ENCODE measurements at regions of chr10 and their contacts with region 1.

Region 1: DNA sequence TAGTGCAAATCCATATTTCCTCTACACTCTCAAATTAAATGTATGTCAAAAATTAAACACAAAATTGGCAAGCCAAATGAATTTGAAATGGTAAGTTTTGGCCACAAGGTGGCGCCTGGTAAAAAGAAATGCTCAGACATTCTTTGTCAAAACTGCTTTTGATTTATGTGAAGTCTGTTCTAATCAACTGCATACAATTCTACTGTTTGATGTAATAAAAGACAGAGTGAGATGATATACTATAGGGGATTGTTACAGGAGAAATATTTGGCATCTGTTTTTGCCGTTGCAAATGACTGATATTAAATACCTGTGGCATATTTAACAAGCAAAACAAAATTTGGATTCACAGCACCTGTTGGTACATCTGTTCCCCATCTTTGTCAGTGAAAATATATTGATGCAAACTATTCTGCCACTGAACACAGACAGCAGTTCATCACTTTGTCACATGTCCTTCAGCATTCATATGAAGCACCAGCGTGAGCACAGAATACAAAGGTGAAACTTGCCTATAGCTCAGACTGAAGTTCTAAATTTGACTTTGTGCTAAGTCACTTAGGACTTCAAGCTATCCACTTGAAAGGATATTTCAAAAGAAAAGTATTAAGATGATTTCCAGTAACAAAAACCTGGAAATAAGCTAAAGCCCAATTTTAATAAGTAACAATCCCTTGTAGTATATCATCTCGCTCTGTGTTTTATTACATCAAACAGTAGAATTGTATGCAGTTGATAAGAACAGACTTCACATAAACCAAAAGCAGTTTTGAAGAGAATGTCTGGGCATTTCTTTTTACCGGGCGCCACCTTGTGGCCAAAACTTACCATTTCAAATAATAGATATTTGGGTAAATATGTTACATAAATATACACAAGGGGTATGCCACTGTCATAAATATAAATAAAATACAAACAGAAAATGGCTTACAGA is 10.2 kb upstream of the CH25H start:
- DNase-seq: peak; percentile 70
- H3K4me3 ChIP-seq: no peak overlapping the region
- H3K27ac ChIP-seq: no peak overlapping the region
- H3K4me1 ChIP-seq: peaks cover 6% of the 10 kb centered on the region
- CTCF ChIP-seq: peak; percentile 89

Region 2: GRCh38 chr10:88835096-88835909 is 382.0 kb before region 1 on chr10:
- CTCF ChIA-PET with region 1: no interaction called
- POLR2A ChIA-PET with region 1: interaction called, 3 read pairs
- intact Hi-C with region 1: loop called (anchors 2 kb)
- DNase-seq: peak; percentile 88
- H3K4me3 ChIP-seq: no peak overlapping the region
- H3K27ac ChIP-seq: no peak overlapping the region
- H3K4me1 ChIP-seq: peaks cover 15% of the 10 kb centered on the region
- CTCF ChIP-seq: peak; percentile 99

Region 3: GRCh38 chr10:89029785-89030437 is 187.4 kb before region 1 on chr10:
- CTCF ChIA-PET with region 1: interaction called, 3 read pairs
- POLR2A ChIA-PET with region 1: interaction called, 4 read pairs
- intact Hi-C with region 1: loop called (anchors 1 kb)
- DNase-seq: peak; percentile 77
- H3K4me3 ChIP-seq: no peak overlapping the region
- H3K27ac ChIP-seq: no peak overlapping the region
- H3K4me1 ChIP-seq: no peaks in the 10 kb centered on the region
- CTCF ChIP-seq: peak; percentile 94

Region 4: GRCh38 chr10:89342206-89342958 is 125.1 kb after region 1 on chr10:
- CTCF ChIA-PET with region 1: no interaction called
- POLR2A ChIA-PET with region 1: no interaction called
- intact Hi-C with region 1: no loop called
- DNase-seq: no peak
- H3K4me3 ChIP-seq: no peak overlapping the region
- H3K27ac ChIP-seq: no peak overlapping the region
- H3K4me1 ChIP-seq: no peaks in the 10 kb centered on the region
- CTCF ChIP-seq: no peak

Region 5: DNA sequence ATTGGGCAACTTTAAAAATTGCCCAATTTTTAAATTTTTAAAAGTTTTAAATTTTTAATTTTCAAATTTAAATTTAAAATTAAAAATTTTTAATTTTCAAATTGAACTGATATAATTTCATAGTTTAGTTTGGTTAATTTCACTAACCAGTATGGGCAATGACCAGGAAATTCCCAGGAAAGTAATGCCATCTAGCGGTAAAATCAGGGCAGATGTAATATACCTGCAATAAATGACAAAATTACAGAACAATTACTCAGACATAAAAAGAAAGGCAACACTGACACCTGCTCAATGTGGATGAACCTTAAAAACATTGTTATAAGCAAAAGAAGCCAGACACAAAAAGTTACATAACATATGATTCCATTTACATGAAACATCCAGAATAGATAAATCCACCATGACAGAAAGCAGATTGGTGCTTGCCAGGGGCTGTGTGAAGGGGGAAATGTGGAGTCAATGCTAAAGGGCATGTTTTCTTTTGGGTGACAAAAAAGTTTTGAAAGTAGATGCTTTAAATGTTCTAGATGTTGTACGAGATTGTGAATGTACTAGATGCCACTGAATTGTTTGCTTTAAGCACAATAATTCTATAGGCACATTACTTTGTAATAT is 346.6 kb after region 1 on chr10:
- CTCF ChIA-PET with region 1: no interaction called
- POLR2A ChIA-PET with region 1: no interaction called
- intact Hi-C with region 1: loop called (anchors 1 kb)
- DNase-seq: peak; percentile 57
- H3K4me3 ChIP-seq: no peak overlapping the region
- H3K27ac ChIP-seq: no peak overlapping the region
- H3K4me1 ChIP-seq: no peaks in the 10 kb centered on the region
- CTCF ChIP-seq: peak; percentile 90

Region 6: GRCh38 chr10:90138844-90139243 is 921.5 kb after region 1 on chr10:
- CTCF ChIA-PET with region 1: no interaction called
- POLR2A ChIA-PET with region 1: no interaction called
- intact Hi-C with region 1: no loop called
- DNase-seq: peak; percentile 47
- H3K4me3 ChIP-seq: no peak overlapping the region
- H3K27ac ChIP-seq: no peak overlapping the region
- H3K4me1 ChIP-seq: no peaks in the 10 kb centered on the region
- CTCF ChIP-seq: peak; percentile 78